ENCODE measurements at regions of chr6 and their contacts with region 1.

Region 1: DNA sequence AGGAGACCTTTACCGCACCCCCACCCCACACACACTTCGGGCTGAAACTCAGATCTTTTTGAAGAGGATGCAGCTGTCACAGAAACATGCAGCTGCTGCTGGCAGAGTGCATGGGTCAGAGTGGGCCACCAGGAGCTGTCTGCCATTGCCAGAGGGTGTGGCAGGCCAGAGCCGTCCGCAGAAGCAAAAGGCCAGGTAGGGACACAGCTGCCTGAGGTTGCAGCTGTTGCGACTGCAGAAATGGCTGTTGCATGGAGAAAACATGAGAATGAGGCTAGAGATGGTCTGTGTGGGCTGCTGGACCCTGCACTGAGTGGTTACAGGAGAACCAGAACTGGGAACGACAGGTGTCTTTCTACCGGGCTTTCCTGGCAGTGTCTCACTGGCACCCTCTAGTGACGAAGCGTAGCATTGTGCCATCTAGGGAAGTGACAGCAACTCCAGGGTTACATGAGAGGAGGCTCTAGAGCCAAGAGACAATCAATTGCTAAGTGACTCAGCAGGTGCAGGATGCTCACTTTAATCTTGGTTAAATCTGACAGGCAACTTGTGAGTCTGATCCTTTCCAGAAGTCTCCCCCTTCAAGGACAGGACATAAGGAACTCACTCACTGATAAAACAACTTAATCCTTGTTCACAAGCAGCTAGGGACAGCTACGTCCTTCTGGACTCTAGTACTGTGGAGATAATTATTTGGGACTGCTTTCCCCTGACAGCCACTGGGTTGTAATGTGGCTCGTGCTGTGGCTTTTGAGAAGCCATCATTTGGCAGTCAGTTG is 29.1 kb upstream of the SERPINB9 start:
- DNase-seq: peak; percentile 69 to 91 (median 83)
- H3K4me3 ChIP-seq: peak overlapping the region in 54 of 59 donors; percentile 9 to 69 (median 40)
- H3K27ac ChIP-seq: peak overlapping the region in 10 of 59 donors; percentile 3 to 62 (median 32)
- H3K27me3 ChIP-seq: no peaks in the 10 kb centered on the region
- CTCF ChIP-seq: peak; percentile 56 to 99 (median 96)

Region 2: DNA sequence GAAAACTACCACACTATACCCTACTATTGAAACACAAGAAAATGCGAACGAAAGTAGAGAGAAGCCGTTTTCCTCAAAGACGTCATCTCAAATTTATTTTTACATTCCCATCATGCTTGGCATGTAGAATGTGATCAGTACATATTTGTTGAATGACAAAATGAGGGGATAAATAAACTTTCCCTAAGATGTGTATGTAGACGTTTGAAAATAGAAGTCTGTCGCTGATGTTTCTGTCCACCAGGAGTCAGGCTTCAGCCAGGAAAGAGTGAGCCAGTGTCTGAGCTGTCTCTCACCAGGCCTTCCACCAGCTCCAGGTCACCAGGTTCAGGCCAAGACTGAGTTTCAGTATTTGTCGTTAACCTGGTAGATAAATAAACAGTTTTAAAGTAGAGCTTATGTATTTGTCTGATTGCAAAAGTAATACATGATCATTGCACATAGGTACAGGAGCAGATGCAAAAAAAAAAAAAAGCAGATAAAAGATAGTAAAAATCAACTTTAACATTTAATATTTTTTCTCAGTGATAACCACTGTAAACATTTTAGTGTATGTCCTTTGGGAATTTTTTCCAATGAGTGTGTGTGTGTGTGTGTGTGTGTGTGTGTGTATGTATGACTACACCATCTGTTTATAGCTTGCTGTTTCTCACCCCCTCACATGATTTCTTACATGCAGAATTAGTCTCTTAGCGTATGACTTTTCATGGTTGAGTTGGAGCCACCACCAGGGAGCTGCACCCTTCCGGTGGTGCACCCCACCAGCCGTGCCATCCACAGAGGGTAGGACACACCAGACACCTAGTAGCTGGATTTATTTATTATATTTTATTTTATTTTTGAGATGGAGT is 140.8 kb before region 1 on chr6:
- intact Hi-C with region 1: loop called (anchors 2 to 5 kb)
- DNase-seq: peak in 8 of 10 donors; percentile 46 to 78 (median 70)
- H3K4me3 ChIP-seq: peak overlapping the region in 1 of 59 donors; percentile 14
- H3K27ac ChIP-seq: peak overlapping the region in 51 of 59 donors; percentile 18 to 82 (median 56)
- H3K27me3 ChIP-seq: no peaks in the 10 kb centered on the region
- CTCF ChIP-seq: peak; percentile 60 to 90 (median 76)

Region 3: GRCh38 chr6:2799936-2800527 is 132.1 kb before region 1 on chr6:
- intact Hi-C with region 1: loop called in 1 of 2 experiments (anchors 5 kb)
- DNase-seq: no peak
- H3K4me3 ChIP-seq: no peak overlapping the region
- H3K27ac ChIP-seq: no peak overlapping the region
- H3K27me3 ChIP-seq: no peaks in the 10 kb centered on the region
- CTCF ChIP-seq: no peak

Region 4: DNA sequence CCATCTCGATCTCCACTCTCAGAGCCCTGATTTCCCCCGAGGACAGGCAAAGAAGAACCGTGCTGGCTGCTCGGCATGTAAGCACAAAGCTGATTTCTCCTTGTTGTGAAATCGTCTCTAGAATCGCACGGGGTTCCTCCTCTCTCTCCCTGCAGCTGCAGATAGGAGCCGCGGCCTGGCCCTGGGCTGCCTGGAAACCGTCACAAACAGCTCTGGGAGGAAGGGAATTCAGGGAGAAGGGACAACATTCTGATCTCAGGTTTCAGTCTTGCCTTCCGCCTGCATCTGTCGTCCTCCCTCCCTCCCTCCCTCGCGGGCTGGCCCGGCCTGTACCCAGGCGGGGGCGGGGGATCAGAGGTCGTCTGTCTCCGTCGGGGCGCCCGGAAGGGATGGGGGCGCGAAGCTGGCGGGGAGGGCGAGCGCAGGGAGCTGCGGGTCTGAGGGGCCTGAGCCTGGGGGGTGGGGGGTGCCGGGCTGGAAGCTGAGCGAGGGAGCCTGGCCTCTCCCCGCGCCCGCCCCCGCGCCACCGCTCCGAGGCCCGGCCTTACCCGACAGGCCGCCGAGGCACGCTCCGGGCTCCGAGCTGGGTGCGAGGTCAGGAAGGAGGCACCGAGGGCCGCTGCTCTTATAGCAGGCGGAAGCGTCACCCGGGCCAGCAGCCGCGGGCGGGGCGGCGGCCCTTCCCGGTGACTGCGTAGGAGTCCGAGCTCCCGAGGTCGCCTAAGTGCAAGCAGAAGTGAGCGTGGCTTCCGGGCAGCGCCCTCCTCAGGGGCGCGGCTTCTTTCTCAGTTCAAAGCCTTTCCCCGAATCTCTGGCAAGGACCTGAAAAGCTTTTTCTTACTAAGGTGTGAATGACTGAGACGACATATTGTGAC is 90.7 kb before region 1 on chr6 and contains the start of gene SERPINB1:
- intact Hi-C with region 1: loop called (anchors 1 to 5 kb)
- DNase-seq: peak; percentile 38 to 81 (median 63)
- H3K4me3 ChIP-seq: peak within 1 kb of the TSS; percentile 40 to 77 (median 67)
- H3K27ac ChIP-seq: peak within 1 kb of the TSS; percentile 63 to 96 (median 90)
- H3K27me3 ChIP-seq: no peaks in the 10 kb centered on the region
- CTCF ChIP-seq: peak in 43 of 56 donors; percentile 12 to 62 (median 36)
- total RNA-seq, gene SERPINB1: 5.2 to 34.5 (median 12.1) TPM

Region 5: DNA sequence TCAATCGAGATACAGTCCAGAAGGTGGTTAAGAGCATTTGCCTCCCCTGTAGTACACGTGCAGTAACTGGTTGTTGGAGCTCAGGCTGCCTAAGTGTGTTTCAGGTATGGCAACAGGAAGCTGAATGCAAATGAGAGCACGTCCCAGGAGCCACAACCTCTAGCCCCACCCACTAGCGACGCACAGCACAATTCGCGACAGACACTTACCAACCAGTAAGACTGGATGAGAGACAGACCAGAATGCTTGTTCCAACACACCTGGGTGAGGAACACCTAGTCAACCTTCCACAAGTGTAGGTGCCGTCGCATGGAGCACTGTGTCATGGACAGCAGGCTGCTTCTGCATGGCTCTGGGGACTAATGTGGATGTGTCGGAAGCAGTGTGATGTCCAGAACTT is 83.3 kb before region 1 on chr6:
- intact Hi-C with region 1: loop called (anchors 1 to 5 kb)
- DNase-seq: no peak
- H3K4me3 ChIP-seq: no peak overlapping the region
- H3K27ac ChIP-seq: no peak overlapping the region
- H3K27me3 ChIP-seq: no peaks in the 10 kb centered on the region
- CTCF ChIP-seq: no peak

Region 6: GRCh38 chr6:2853761-2854395 is 78.3 kb before region 1 on chr6:
- intact Hi-C with region 1: loop called in 1 of 2 experiments (anchors 2 kb)
- DNase-seq: no peak
- H3K4me3 ChIP-seq: peak overlapping the region in 54 of 59 donors; percentile 5 to 64 (median 44)
- H3K27ac ChIP-seq: peak overlapping the region in 54 of 59 donors; percentile 3 to 83 (median 63)
- H3K27me3 ChIP-seq: no peaks in the 10 kb centered on the region
- CTCF ChIP-seq: peak; percentile 24 to 69 (median 51)

Measured in dorsolateral prefrontal cortex (tissue), 120 donors.